Heart left ventricle (tissue), 16 donors: ENCODE measurements at regions of chr1 and their contacts with region 1.

Region 1: GRCh38 chr1:182235952-182236650 is 155.5 kb downstream of the GLUL start:
- DNase-seq: peak in 4 of 5 donors; percentile 22 to 78 (median 58)
- ATAC-seq: peak; percentile 84 to 97 (median 96)
- H3K4me3 ChIP-seq: no peak overlapping the region
- H3K27ac ChIP-seq: peak overlapping the region in 9 of 12 donors; percentile 13 to 67 (median 33)
- H3K4me1 ChIP-seq: peaks cover 0 to 25% (median 5%) of the 10 kb centered on the region in 12 donors
- H3K27me3 ChIP-seq: no peaks in the 10 kb centered on the region
- CTCF ChIP-seq: no peak
- POLR2A ChIP-seq: no peak

Region 2: DNA sequence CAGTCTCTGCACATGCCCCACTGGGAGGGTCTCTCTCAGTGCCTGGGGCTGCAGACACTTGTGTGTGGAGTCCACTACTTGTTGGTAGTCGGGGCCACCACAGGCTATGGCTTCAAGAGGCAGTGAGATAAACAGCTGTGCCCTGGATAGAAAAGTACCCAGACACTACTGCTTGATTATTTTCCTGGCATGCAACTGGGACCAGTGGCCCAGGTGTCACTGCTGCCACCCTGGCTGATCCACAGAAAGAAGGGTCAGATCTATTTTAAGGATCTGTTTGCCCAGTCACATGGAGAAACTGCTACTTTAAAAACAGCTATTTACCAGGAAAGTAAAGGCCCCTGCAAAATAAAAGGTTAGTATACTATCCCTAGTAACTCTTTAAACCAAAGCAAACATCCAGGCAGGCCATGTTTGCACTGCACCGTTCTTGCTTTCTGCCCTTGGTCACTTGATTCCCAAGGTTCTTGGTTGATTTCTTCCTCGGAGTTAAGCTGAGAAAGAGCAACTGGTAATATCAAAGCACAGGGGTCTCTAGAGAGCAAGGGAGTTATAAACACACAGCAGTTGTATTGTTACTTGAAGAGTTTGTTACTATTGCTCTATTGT is 55.6 kb after region 1 on chr1:
- intact Hi-C with region 1: no loop called
- DNase-seq: peak in 2 of 5 donors; percentile 34 to 41
- ATAC-seq: peak; percentile 29 to 69 (median 56)
- H3K4me3 ChIP-seq: no peak overlapping the region
- H3K27ac ChIP-seq: peak overlapping the region in 6 of 12 donors; percentile 11 to 81 (median 25)
- H3K4me1 ChIP-seq: peaks cover 0 to 31% (median 16%) of the 10 kb centered on the region in 12 donors
- H3K27me3 ChIP-seq: no peaks in the 10 kb centered on the region
- CTCF ChIP-seq: no peak
- POLR2A ChIP-seq: no peak

Region 3: GRCh38 chr1:182367926-182368325 is 131.8 kb after region 1 on chr1:
- intact Hi-C with region 1: loop called in 1 of 10 experiments (anchors 10 kb)
- DNase-seq: no peak
- ATAC-seq: no peak
- H3K4me3 ChIP-seq: no peak overlapping the region
- H3K27ac ChIP-seq: no peak overlapping the region
- H3K4me1 ChIP-seq: peaks cover 0 to 17% (median 6%) of the 10 kb centered on the region in 12 donors
- H3K27me3 ChIP-seq: no peaks in the 10 kb centered on the region
- CTCF ChIP-seq: no peak
- POLR2A ChIP-seq: no peak